CD8-positive, alpha-beta T cell (primary cell): ENCODE measurements at regions of chr4 and their contacts with region 1.

Region 1: DNA sequence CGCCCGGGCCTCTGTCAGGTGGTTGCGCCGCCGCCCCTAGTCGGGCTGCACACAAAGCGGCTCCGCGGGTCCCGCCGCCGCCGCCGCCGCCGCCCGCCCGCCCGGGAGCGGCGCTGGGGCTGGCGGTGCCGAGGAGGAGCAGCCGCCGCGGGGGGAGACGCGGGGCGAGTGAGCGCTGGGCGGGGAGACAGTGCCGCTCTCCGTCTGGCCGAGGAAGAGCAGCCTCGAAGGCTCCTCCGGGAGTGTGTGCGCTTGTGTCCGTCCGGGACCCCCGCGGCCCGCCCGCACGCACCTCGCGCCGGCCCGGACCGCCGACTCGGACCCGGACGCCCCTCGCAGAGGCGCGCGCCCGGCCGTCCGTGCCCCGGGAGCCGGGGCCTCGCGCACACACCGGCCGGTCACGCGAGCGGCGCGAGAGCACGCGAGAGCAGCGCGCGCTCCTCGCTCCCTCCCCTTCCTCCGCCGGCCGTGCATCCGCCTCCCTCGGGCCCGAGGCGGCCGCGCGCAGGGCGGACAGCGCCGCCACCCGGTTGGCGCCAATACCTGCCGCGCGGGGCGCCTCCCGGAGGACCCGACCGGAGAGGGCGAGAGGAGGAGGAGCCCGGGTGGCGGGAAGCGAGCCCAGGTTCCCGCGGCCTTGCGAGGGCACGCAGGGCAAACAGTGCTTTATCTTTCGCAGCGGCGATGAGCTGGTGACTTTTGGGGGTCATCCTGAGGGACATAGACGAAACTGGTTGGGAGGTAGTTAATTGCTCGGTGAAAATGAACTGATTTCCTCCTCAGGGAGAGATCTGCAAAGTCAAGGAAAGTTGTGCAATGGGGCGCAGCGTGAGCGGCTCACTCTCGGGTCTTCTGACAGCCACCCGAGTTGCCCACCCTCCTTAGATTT is at the start of gene PDS5A:
- DNase-seq: peak; percentile 76 to 96 (median 87)
- ATAC-seq: peak; percentile 83
- H3K4me3 ChIP-seq: peak within 1 kb of the TSS; percentile 76 to 77
- H3K4me3 Mint-ChIP-seq: peak within 1 kb of the TSS; percentile 90
- H3K27ac ChIP-seq: peak within 1 kb of the TSS; percentile 80 to 81
- H3K27ac Mint-ChIP-seq: peak within 1 kb of the TSS; percentile 95
- H3K4me1 ChIP-seq: peaks cover 31% of the 10 kb centered on the region
- H3K4me1 Mint-ChIP-seq: peaks cover 30% of the 10 kb centered on the region
- H3K27me3 ChIP-seq: no peaks in the 10 kb centered on the region
- H3K27me3 Mint-ChIP-seq: no peaks in the 10 kb centered on the region
- CTCF ChIP-seq: peak; percentile 79
- total RNA-seq, gene PDS5A: 75.5 to 84.0 TPM

Region 2: DNA sequence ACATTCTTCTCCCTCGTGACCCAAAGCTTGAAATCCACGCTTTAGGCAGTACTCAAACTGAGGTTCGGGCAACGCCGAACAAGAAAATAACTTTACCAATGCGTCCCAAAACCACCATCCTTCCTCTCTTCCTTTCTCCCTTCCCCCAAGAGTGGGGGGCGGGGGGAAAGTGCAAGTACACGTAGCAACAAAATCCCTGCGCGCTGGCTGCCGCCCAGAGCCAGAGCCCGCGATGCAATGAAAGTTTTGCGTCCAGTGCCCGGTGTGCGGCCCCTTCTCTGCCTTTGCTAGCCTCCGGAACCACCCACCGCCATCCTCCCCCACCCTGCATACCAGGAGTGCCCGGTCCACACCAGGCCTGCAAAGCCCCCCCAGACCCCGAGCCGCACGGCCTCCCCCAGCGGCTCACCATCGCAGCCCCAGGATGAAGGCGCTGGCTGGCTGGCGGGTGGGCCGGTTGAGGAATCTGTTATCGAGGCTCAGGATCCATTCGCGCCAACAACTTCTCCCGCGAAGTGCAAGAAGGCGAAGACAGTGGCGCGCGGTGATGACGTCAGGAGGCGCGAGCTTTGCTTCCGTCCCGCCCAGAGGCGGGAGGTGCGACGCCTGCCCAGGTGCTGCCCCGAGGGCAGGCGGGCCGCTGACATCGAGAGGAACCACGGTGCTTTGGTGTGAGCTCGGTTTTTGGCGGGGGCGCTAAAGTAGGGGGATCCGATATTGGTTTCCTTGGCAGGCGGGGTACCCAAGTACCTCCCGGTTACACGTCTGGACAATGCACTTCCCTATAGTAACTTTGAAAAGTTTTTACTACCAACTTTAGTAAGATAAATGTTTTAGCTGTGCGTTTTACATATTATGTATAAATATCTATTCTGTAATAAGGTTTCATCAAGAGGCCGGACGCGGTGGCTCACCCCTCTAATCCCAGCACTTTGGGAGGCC is 611.6 kb before region 1 on chr4 and contains the start of gene RFC1:
- CTCF ChIA-PET with region 1: no interaction called
- POLR2A ChIA-PET with region 1: no interaction called
- intact Hi-C with region 1: loop called in 1 of 2 experiments (anchors 5 kb)
- DNase-seq: peak; percentile 86 to 96 (median 95)
- ATAC-seq: peak; percentile 97
- H3K4me3 ChIP-seq: peak within 1 kb of the TSS; percentile 92 to 99
- H3K4me3 Mint-ChIP-seq: peak within 1 kb of the TSS; percentile 93
- H3K27ac ChIP-seq: peak within 1 kb of the TSS; percentile 81
- H3K27ac Mint-ChIP-seq: peak within 1 kb of the TSS; percentile 94
- H3K4me1 ChIP-seq: peaks cover 18% of the 10 kb centered on the region
- H3K4me1 Mint-ChIP-seq: peaks cover 35% of the 10 kb centered on the region
- H3K27me3 ChIP-seq: no peaks in the 10 kb centered on the region
- H3K27me3 Mint-ChIP-seq: no peaks in the 10 kb centered on the region
- CTCF ChIP-seq: no peak
- total RNA-seq, gene RFC1: 82.2 to 89.8 TPM

Region 3: GRCh38 chr4:39527273-39528060 is 450.3 kb before region 1 on chr4 and contains the start of gene UGDH:
- CTCF ChIA-PET with region 1: no interaction called
- POLR2A ChIA-PET with region 1: no interaction called
- intact Hi-C with region 1: loop called (anchors 1 to 2 kb)
- DNase-seq: peak; percentile 81 to 96 (median 90)
- ATAC-seq: peak; percentile 98
- H3K4me3 ChIP-seq: peak within 1 kb of the TSS; percentile 87 to 89
- H3K4me3 Mint-ChIP-seq: peak within 1 kb of the TSS; percentile 96
- H3K27ac ChIP-seq: peak within 1 kb of the TSS; percentile 68 to 74
- H3K27ac Mint-ChIP-seq: peak within 1 kb of the TSS; percentile 93
- H3K4me1 ChIP-seq: peaks cover 17% of the 10 kb centered on the region
- H3K4me1 Mint-ChIP-seq: peaks cover 24% of the 10 kb centered on the region
- H3K27me3 ChIP-seq: no peaks in the 10 kb centered on the region
- H3K27me3 Mint-ChIP-seq: no peaks in the 10 kb centered on the region
- CTCF ChIP-seq: no peak
- total RNA-seq, gene UGDH: 2.6 to 3.6 TPM

Region 4: GRCh38 chr4:39846120-39846519 is 131.6 kb before region 1 on chr4:
- CTCF ChIA-PET with region 1: no interaction called
- POLR2A ChIA-PET with region 1: no interaction called
- intact Hi-C with region 1: loop called in 1 of 2 experiments (anchors 5 kb)
- DNase-seq: no peak
- ATAC-seq: no peak
- H3K4me3 ChIP-seq: no peak overlapping the region
- H3K4me3 Mint-ChIP-seq: no peak overlapping the region
- H3K27ac ChIP-seq: no peak overlapping the region
- H3K27ac Mint-ChIP-seq: no peak overlapping the region
- H3K4me1 ChIP-seq: no peaks in the 10 kb centered on the region
- H3K4me1 Mint-ChIP-seq: no peaks in the 10 kb centered on the region
- H3K27me3 ChIP-seq: no peaks in the 10 kb centered on the region
- H3K27me3 Mint-ChIP-seq: no peaks in the 10 kb centered on the region
- CTCF ChIP-seq: no peak

Region 5: DNA sequence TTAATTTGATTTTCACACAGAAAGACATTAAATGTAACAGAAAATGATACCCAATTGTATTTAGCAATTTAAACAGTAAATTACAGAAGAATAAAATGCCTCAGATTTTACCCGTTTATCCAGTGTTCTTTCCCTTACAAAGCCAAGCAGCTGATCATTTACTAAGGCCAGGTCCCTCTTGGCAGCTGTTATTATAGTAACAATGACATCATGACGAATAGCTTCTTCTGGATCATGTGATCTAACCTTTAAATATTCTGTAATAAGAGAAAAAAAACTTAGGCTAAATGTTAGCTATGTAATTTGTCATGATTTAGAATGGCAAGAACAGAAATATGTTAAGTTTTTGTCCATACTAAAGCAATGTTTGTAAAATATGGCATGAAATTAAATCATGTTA is 69.4 kb before region 1 on chr4:
- CTCF ChIA-PET with region 1: no interaction called
- POLR2A ChIA-PET with region 1: no interaction called
- intact Hi-C with region 1: loop called in 1 of 2 experiments (anchors 5 kb)
- DNase-seq: no peak
- ATAC-seq: no peak
- H3K4me3 ChIP-seq: no peak overlapping the region
- H3K4me3 Mint-ChIP-seq: no peak overlapping the region
- H3K27ac ChIP-seq: no peak overlapping the region
- H3K27ac Mint-ChIP-seq: no peak overlapping the region
- H3K4me1 ChIP-seq: no peaks in the 10 kb centered on the region
- H3K4me1 Mint-ChIP-seq: no peaks in the 10 kb centered on the region
- H3K27me3 ChIP-seq: no peaks in the 10 kb centered on the region
- H3K27me3 Mint-ChIP-seq: no peaks in the 10 kb centered on the region
- CTCF ChIP-seq: no peak

Region 6: GRCh38 chr4:40325189-40326019 is 347.7 kb after region 1 on chr4:
- CTCF ChIA-PET with region 1: interaction called, 3 read pairs
- POLR2A ChIA-PET with region 1: no interaction called
- intact Hi-C with region 1: loop called (anchors 2 to 5 kb)
- DNase-seq: peak in 8 of 9 experiments; percentile 47 to 89 (median 69)
- ATAC-seq: peak; percentile 100
- H3K4me3 ChIP-seq: no peak overlapping the region
- H3K4me3 Mint-ChIP-seq: no peak overlapping the region
- H3K27ac ChIP-seq: no peak overlapping the region
- H3K27ac Mint-ChIP-seq: peak overlapping the region; percentile 3
- H3K4me1 ChIP-seq: peaks cover 11% of the 10 kb centered on the region
- H3K4me1 Mint-ChIP-seq: peaks cover 30% of the 10 kb centered on the region
- H3K27me3 ChIP-seq: no peaks in the 10 kb centered on the region
- H3K27me3 Mint-ChIP-seq: no peaks in the 10 kb centered on the region
- CTCF ChIP-seq: peak; percentile 99